Heart right ventricle (tissue), 16 donors: ENCODE measurements at regions of chr20 and their contacts with region 1.

Region 1: GRCh38 chr20:52083627-52084232 is 107.8 kb downstream of the ZFP64 start:
- DNase-seq: peak in 1 of 2 donors; percentile 48
- ATAC-seq: peak in 6 of 8 donors; percentile 19 to 67 (median 54)
- H3K4me3 ChIP-seq: no peak overlapping the region
- H3K27ac ChIP-seq: no peak overlapping the region
- H3K4me1 ChIP-seq: no peaks in the 10 kb centered on the region
- H3K27me3 ChIP-seq: no peaks in the 10 kb centered on the region
- CTCF ChIP-seq: peak; percentile 13 to 72 (median 59)

Region 2: GRCh38 chr20:51372176-51372803 is 711.4 kb before region 1 on chr20:
- intact Hi-C with region 1: loop called in 1 of 10 experiments (anchors 10 kb)
- DNase-seq: peak; percentile 54 to 74
- ATAC-seq: peak; percentile 76 to 95 (median 91)
- H3K4me3 ChIP-seq: no peak overlapping the region
- H3K27ac ChIP-seq: no peak overlapping the region
- H3K4me1 ChIP-seq: peaks cover 4 to 29% (median 16%) of the 10 kb centered on the region in 9 donors
- H3K27me3 ChIP-seq: peaks cover 0 to 2% (median 0%) of the 10 kb centered on the region in 7 donors
- CTCF ChIP-seq: peak; percentile 79 to 93 (median 84)

Region 3: GRCh38 chr20:51639206-51639832 is 444.4 kb before region 1 on chr20:
- intact Hi-C with region 1: loop called (anchors 2 to 10 kb)
- DNase-seq: peak; percentile 65 to 69
- ATAC-seq: peak; percentile 64 to 83 (median 78)
- H3K4me3 ChIP-seq: no peak overlapping the region
- H3K27ac ChIP-seq: no peak overlapping the region
- H3K4me1 ChIP-seq: peaks cover 0 to 9% (median 0%) of the 10 kb centered on the region in 9 donors
- H3K27me3 ChIP-seq: no peaks in the 10 kb centered on the region
- CTCF ChIP-seq: peak; percentile 66 to 89 (median 85)

Region 4: GRCh38 chr20:51695574-51696303 is 388.0 kb before region 1 on chr20:
- intact Hi-C with region 1: loop called in 4 of 10 experiments (anchors 5 to 10 kb)
- DNase-seq: no peak
- ATAC-seq: no peak
- H3K4me3 ChIP-seq: no peak overlapping the region
- H3K27ac ChIP-seq: no peak overlapping the region
- H3K4me1 ChIP-seq: peaks cover 0 to 15% (median 0%) of the 10 kb centered on the region in 9 donors
- H3K27me3 ChIP-seq: peaks cover 0 to 9% (median 0%) of the 10 kb centered on the region in 7 donors
- CTCF ChIP-seq: no peak

Region 5: GRCh38 chr20:51703400-51704287 is 380.1 kb before region 1 on chr20:
- intact Hi-C with region 1: loop called in 4 of 10 experiments (anchors 5 to 10 kb)
- DNase-seq: no peak
- ATAC-seq: no peak
- H3K4me3 ChIP-seq: no peak overlapping the region
- H3K27ac ChIP-seq: no peak overlapping the region
- H3K4me1 ChIP-seq: no peaks in the 10 kb centered on the region
- H3K27me3 ChIP-seq: no peaks in the 10 kb centered on the region
- CTCF ChIP-seq: no peak

Region 6: DNA sequence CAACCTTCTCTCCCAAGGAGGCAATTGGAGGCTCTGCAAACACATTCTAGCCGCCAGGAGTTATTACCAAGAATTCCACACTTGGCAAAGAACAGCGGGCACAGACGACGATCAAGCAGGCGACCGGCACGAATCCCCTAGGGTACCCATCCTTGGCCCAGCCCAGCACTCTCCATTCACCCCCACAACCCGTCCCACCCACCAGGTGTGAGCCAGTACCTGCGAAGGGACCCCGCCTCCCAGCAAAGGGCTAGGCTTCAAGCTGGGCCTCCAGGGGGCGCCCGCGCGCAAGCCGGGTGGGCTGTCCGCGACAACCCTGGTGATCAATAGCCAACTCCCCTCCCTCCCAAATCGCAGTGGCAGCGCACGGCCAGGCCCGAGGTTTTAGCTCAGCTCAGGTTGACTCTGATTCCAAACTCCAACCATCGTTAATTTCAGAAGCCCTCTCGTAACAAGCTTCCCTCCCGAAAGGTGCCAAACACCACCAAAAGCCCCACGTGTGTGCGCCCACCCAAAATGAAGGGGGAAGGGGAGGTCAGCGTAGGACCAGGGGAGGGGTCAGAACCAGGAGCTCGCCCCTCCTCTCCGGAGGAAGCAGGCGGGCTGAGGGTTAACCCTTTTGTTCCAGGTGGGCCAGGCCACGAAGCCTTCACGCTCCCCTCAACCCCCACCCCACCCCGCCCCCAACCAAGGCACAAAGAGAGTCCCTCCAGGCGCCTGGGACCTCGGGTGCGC is 283.5 kb before region 1 on chr20:
- intact Hi-C with region 1: loop called in 8 of 10 experiments (anchors 5 to 10 kb)
- DNase-seq: peak; percentile 48 to 57
- ATAC-seq: peak; percentile 47 to 79 (median 66)
- H3K4me3 ChIP-seq: peak overlapping the region in 9 of 10 donors; percentile 29 to 59 (median 52)
- H3K27ac ChIP-seq: no peak overlapping the region
- H3K4me1 ChIP-seq: peaks cover 2 to 25% (median 19%) of the 10 kb centered on the region in 9 donors
- H3K27me3 ChIP-seq: peaks cover 0 to 83% (median 69%) of the 10 kb centered on the region in 7 donors
- CTCF ChIP-seq: peak; percentile 58 to 83 (median 79)

Region 7: GRCh38 chr20:52060794-52061714 is 22.7 kb before region 1 on chr20:
- intact Hi-C with region 1: no loop called
- DNase-seq: no peak
- ATAC-seq: peak in 5 of 8 donors; percentile 57 to 71 (median 67)
- H3K4me3 ChIP-seq: no peak overlapping the region
- H3K27ac ChIP-seq: no peak overlapping the region
- H3K4me1 ChIP-seq: peaks cover 0 to 8% (median 0%) of the 10 kb centered on the region in 9 donors
- H3K27me3 ChIP-seq: no peaks in the 10 kb centered on the region
- CTCF ChIP-seq: peak in 8 of 9 donors; percentile 7 to 51 (median 40)